ENCODE measurements at regions of chr5 and their contacts with region 1.

Region 1: DNA sequence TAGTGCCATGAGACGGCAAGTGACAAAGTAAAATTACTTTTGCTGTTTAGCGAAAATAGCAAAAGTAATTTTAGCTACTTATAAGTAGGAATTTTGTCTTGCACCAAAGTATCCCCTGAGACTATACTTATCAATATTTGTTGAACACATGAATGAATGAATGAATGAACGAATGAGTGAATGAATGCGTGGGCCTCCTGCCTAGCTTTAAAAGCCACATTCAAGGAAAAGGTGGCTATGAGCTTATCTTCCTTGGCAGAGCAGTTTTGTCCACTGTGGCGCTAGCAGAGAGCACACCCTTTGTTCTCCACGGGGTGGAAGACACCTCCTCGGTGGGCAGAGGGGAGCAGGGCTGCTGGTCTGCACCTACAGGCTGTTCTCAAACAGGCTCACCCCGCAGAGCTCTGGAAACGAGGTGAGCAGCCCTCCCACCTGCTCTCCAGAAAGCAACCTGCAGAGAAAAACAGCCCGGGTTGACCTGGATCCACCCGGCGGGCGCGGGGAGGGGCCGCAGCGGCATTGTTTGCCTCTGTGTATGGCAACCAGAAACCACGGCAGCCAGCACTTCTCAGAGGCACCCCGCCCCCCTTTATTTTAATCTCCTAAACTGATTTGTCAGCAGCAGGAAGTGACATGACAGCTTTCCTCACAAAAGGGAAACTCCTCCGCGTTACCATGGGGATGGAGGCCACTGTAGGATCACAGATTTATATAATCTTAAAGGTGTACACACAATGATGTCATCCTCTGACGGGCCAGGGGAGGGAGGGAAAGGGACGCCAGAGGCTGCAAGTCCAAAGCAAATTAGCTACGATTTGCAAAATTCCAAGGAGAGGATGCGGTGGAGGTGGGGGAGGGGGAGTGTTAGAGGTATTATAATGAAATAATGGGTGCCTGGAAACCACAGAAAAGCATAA is 5.9 kb downstream of the DUSP1 start:
- DNase-seq: peak; percentile 96
- ATAC-seq: peak; percentile 63 to 76

Region 2: DNA sequence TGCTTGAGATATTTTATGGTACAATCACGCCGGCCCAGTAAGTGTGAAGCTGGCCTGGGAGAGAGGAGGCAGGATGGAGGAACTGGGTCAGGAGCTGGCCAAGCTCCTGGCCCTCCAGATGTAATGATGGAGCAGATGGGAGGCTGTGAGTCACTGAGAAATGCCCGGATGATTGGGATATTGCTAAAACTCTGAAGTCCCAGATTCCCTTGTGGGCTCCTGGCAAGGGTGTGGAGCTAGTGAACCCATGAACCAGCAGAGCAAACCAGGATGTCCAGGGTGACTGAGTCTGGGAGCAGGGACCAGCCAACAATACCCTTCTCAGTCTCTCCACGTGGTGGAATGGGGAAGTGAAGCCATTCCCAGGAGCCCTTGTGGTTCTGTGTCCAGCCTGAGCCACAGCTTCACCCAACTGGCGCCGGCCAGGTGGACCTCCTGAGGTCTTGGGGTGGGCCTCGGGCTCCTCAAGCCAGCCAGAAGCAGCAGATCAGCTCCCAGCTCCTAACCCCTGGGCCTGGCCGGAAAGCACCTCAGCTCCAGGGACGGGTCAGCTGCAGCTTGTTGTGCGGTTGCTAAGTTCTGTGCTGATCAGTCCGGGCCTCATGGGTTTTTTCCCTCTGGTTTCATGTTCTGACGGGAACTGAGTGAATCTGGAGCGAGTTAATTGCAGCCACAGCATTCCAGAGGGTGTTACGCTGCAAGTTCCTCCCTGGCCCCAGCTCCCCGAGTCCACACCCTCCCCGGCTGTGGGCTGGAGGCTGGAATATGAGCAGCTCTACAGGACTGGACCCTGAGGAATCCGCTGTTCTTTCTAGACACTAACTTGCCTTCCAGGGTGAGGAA is 31.8 kb before region 1 on chr5:
- intact Hi-C with region 1: loop called in 1 of 2 experiments (anchors 5 kb)
- DNase-seq: peak; percentile 91
- ATAC-seq: peak; percentile 94 to 96

Region 3: GRCh38 chr5:172749881-172750633 is 15.1 kb before region 1 on chr5:
- intact Hi-C with region 1: loop called in 1 of 2 experiments (anchors 1 kb)
- DNase-seq: peak; percentile 63
- ATAC-seq: peak; percentile 43 to 63

Measured in left cardiac atrium (tissue), 4 donors.